MCF 10A (cell line): ENCODE measurements at regions of chr15 and their contacts with region 1.

Region 1: GRCh38 chr15:95025924-95026728 is 794.8 kb downstream of the MCTP2 start:
- DNase-seq: peak; percentile 73
- H3K4me3 Mint-ChIP-seq: no peak overlapping the region
- H3K27ac Mint-ChIP-seq: no peak overlapping the region
- H3K4me1 Mint-ChIP-seq: no peaks in the 10 kb centered on the region
- H3K27me3 Mint-ChIP-seq: no peaks in the 10 kb centered on the region
- CTCF ChIP-seq: peak; percentile 78

Region 2: DNA sequence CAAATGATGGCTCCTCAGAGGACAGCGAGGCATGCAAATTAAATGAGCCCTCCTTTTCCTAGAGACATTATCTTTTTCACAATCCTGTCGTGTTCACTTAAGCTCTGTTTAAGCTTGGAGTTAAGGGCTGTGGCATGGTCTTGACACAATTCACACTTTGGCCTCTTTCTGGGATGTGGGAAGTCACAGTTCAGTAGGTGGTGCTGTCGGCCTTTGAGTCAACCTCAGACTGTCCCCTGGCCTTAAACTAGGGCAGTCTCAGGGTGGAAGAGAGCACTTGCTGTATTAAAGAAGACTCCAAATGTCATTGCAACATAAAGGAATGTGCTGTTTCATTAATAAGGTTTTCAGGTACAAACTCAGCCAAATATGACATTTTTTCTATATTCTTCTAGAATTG is 443.8 kb before region 1 on chr15:
- CTCF ChIA-PET with region 1: interaction called, 11 read pairs
- POLR2A ChIA-PET with region 1: no interaction called
- intact Hi-C with region 1: loop called (anchors 5 kb)
- DNase-seq: peak; percentile 62
- H3K4me3 Mint-ChIP-seq: no peak overlapping the region
- H3K27ac Mint-ChIP-seq: no peak overlapping the region
- H3K4me1 Mint-ChIP-seq: no peaks in the 10 kb centered on the region
- H3K27me3 Mint-ChIP-seq: no peaks in the 10 kb centered on the region
- CTCF ChIP-seq: peak; percentile 51

Region 3: GRCh38 chr15:94677202-94677790 is 348.8 kb before region 1 on chr15:
- CTCF ChIA-PET with region 1: interaction called, 17 read pairs
- POLR2A ChIA-PET with region 1: interaction called, 5 read pairs
- intact Hi-C with region 1: no loop called
- DNase-seq: peak; percentile 87
- H3K4me3 Mint-ChIP-seq: peak overlapping the region; percentile 59
- H3K27ac Mint-ChIP-seq: peak overlapping the region; percentile 79
- H3K4me1 Mint-ChIP-seq: peaks cover 31% of the 10 kb centered on the region
- H3K27me3 Mint-ChIP-seq: no peaks in the 10 kb centered on the region
- CTCF ChIP-seq: no peak

Region 4: DNA sequence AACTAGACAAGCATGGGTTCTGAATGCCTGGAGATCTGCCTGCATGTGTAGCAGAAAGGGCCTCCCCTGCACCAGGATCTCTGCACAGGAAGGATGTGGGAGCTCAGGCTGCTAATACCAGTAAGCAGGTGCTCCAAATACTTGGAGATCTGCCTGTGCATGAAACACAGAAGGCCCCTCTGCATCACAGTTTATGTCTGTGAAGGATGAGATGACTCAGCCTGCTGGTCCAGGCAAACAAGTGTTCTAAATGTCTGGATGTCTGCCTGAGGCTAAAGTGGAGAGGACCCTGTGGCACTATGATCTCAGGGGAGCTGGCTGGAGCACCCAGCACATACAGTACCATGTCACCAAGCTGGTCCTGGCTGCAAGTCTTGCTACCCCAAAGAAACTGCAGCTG is 116.0 kb before region 1 on chr15:
- CTCF ChIA-PET with region 1: no interaction called
- POLR2A ChIA-PET with region 1: no interaction called
- intact Hi-C with region 1: no loop called
- DNase-seq: peak; percentile 24
- H3K4me3 Mint-ChIP-seq: no peak overlapping the region
- H3K27ac Mint-ChIP-seq: no peak overlapping the region
- H3K4me1 Mint-ChIP-seq: no peaks in the 10 kb centered on the region
- H3K27me3 Mint-ChIP-seq: no peaks in the 10 kb centered on the region
- CTCF ChIP-seq: no peak

Region 5: GRCh38 chr15:95086531-95087252 is 60.6 kb after region 1 on chr15:
- CTCF ChIA-PET with region 1: no interaction called
- POLR2A ChIA-PET with region 1: no interaction called
- intact Hi-C with region 1: no loop called
- DNase-seq: peak; percentile 20
- H3K4me3 Mint-ChIP-seq: no peak overlapping the region
- H3K27ac Mint-ChIP-seq: no peak overlapping the region
- H3K4me1 Mint-ChIP-seq: peaks cover 7% of the 10 kb centered on the region
- H3K27me3 Mint-ChIP-seq: no peaks in the 10 kb centered on the region
- CTCF ChIP-seq: no peak

Region 6: DNA sequence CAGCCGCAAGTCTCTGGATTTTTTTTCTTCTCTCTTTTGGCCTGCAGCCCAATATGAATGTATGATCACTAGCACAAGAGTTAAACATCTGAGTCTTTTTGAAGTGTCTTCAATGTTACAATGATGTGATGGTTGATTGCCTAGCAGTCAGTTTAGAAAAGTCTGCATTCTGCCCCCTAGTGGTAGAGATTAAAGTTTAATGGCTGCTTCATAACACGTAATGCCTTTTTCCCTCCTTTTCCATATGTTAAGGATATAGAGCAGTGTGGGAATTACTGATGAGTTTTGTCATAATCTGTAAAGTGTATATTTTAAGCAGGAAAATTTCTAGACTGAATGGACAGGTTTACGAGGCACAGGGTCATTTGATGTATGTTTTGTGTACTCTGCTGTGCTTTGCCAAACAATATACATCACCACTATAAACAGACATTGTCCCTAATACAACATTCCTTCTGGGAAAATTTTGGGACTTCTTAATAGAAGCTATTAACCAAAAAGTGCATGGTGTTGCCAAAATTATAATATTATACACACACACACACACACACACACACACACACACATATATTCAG is 265.9 kb after region 1 on chr15:
- CTCF ChIA-PET with region 1: interaction called, 11 read pairs
- POLR2A ChIA-PET with region 1: no interaction called
- intact Hi-C with region 1: loop called (anchors 1 kb)
- DNase-seq: peak; percentile 66
- H3K4me3 Mint-ChIP-seq: no peak overlapping the region
- H3K27ac Mint-ChIP-seq: no peak overlapping the region
- H3K4me1 Mint-ChIP-seq: peaks cover 6% of the 10 kb centered on the region
- H3K27me3 Mint-ChIP-seq: no peaks in the 10 kb centered on the region
- CTCF ChIP-seq: peak; percentile 45

Region 7: DNA sequence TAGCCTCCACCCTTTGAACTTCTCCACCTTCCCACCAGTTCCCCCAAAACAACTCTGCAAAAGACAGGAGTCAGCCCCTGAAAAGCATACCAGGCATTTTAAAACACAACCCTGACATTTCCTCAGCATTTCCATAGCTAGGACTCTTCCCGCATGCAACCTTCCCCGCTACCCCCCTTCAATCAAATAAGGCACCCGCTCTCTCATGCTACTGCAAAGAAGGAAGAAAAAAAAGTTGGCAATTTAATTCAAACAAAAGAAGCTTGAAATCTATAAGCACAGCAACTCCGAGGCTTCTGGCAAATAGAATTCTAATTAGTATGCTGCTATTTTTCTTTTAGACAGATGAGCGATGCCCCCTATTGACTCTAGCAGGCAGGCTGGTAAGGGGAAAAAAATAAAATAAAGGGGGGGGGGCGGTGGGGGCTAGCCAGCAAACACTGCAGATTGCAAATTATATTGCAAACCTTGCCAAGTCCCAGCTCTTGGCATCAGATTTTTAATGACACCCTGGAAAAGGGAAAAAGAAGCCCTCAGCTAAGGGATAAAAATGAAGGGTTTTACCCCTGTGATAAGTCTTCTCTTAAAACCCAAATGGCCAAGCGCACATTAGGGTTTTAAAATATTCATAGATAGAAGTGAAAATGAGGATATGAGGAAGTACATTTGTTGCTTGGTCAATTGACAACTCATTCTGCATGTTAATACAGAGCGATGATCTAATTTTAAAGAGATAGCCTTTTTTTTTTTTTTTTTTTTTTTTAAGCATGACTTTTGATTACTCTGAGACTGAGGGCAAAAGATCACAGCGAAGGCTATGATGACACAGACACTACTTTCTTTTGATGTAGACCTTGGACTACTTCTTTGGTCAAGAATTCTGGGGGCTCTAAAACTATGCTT is 1559.6 kb after region 1 on chr15:
- CTCF ChIA-PET with region 1: no interaction called
- POLR2A ChIA-PET with region 1: no interaction called
- intact Hi-C with region 1: loop called (anchors 10 kb)
- DNase-seq: peak; percentile 8
- H3K4me3 Mint-ChIP-seq: no peak overlapping the region
- H3K27ac Mint-ChIP-seq: no peak overlapping the region
- H3K4me1 Mint-ChIP-seq: no peaks in the 10 kb centered on the region
- H3K27me3 Mint-ChIP-seq: peaks cover 87% of the 10 kb centered on the region
- CTCF ChIP-seq: no peak